ENCODE measurements at regions of chr3 and their contacts with region 1.

Region 1: DNA sequence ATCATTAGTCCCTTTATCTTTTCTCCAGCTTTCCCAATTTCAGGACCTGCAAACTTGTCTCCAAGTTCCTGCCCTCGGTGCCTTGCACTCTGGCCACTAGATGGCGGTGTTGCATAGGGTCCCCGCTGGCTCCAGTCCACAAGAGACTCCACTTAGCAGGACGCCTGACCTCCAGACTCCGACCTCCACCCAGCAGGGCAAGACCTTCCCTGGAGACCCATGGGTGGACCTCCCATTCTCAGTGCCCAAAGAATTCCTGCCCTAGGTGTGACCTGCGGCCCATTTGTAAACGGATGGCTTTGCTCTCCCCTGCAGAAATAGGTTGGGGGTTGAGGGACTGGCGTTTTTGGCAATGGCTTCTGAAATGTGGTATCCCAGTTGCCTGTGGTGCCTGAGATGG is 82.6 kb downstream of the LSM3 start:
- DNase-seq: peak; percentile 11 to 88
- H3K4me3 ChIP-seq: no peak overlapping the region
- H3K27ac ChIP-seq: no peak overlapping the region
- H3K4me1 ChIP-seq: no peaks in the 10 kb centered on the region
- H3K27me3 ChIP-seq: no peaks in the 10 kb centered on the region
- CTCF ChIP-seq: peak; percentile 86 to 98 (median 96)

Region 2: GRCh38 chr3:14203521-14204079 is 57.6 kb before region 1 on chr3:
- intact Hi-C with region 1: loop called (anchors 2 kb)
- DNase-seq: peak in 1 of 2 donors; percentile 78
- H3K4me3 ChIP-seq: no peak overlapping the region
- H3K27ac ChIP-seq: peak overlapping the region in 1 of 2 donors; percentile 24
- H3K4me1 ChIP-seq: peaks cover 8 to 18% of the 10 kb centered on the region in 2 donors
- H3K27me3 ChIP-seq: no peaks in the 10 kb centered on the region
- CTCF ChIP-seq: peak; percentile 66 to 89 (median 82)

Region 3: GRCh38 chr3:14391033-14391432 is 129.8 kb after region 1 on chr3:
- intact Hi-C with region 1: loop called (anchors 10 kb)
- DNase-seq: peak; percentile 38 to 81
- H3K4me3 ChIP-seq: no peak overlapping the region
- H3K27ac ChIP-seq: no peak overlapping the region
- H3K4me1 ChIP-seq: no peaks in the 10 kb centered on the region
- H3K27me3 ChIP-seq: no peaks in the 10 kb centered on the region
- CTCF ChIP-seq: no peak

Region 4: GRCh38 chr3:14467814-14468620 is 206.8 kb after region 1 on chr3:
- intact Hi-C with region 1: loop called (anchors 1 kb)
- DNase-seq: no peak
- H3K4me3 ChIP-seq: no peak overlapping the region
- H3K27ac ChIP-seq: no peak overlapping the region
- H3K4me1 ChIP-seq: no peaks in the 10 kb centered on the region
- H3K27me3 ChIP-seq: no peaks in the 10 kb centered on the region
- CTCF ChIP-seq: peak; percentile 86 to 92 (median 89)

Region 5: DNA sequence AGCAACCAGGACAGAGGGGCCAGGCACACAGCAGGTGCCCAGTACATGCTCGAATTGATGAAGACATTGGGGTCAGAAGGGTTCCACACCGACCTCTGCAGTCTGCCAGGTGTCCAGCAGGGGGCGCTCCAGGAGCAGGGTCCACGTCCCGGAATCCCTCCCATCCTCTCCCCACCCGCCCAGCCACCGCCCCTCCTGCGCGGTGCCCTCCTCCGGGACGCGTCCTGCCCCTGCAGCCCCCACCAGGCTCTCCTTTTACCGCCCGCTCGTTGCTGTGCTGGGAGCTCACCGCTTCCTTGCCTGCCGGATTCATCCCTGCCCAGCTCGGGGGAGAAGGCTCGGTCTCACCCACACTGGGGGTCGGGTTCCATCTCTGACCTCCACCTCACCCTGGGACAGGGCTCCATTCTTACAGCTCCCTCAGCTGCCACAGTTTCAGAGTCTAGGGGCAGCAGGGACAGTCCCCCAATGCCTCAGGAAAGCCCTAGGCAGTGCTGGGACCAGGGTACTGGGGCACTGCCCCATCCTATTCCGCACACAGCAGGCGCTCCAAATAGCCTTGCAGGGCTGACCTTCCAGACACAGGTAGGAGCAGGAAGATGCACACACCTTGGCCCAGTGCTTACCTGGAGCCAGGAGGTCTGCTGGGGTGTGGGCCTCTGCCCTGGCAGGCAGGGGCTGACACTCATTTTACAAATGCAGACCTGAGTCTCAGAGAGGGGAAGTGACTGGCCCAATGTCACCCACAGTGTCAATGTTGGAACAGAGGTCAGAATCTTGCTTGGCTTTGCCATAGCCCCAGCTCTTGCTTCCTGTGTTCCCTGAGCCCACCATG is 247.9 kb after region 1 on chr3:
- intact Hi-C with region 1: no loop called
- DNase-seq: peak in 1 of 2 donors; percentile 76
- H3K4me3 ChIP-seq: peak overlapping the region in 1 of 2 donors; percentile 24
- H3K27ac ChIP-seq: no peak overlapping the region
- H3K4me1 ChIP-seq: no peaks in the 10 kb centered on the region
- H3K27me3 ChIP-seq: no peaks in the 10 kb centered on the region
- CTCF ChIP-seq: peak; percentile 64 to 92 (median 91)

Region 6: DNA sequence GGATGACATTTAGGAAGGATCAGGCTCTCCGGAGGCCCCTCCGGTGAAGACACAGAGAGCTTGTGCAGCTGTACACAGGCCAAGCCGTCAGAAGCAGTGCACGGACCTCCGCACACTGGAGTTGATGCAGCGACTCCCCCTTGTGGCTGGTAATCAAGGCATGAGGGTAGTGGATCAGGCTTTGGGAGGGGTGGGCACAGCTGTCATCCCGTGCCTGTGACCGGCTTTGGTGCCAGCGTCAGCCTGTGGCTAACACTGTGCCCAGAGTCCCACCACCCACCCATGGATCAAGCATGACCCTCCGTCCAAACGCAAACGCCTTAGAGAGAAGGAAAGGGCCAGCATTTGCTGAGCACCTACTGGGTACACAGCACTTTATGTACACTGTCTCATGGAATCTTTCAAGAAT is 287.1 kb after region 1 on chr3:
- intact Hi-C with region 1: loop called (anchors 10 kb)
- DNase-seq: no peak
- H3K4me3 ChIP-seq: no peak overlapping the region
- H3K27ac ChIP-seq: no peak overlapping the region
- H3K4me1 ChIP-seq: no peaks in the 10 kb centered on the region
- H3K27me3 ChIP-seq: no peaks in the 10 kb centered on the region
- CTCF ChIP-seq: peak; percentile 47 to 70 (median 50)